Left ventricle myocardium superior (tissue), 1 donor: ENCODE measurements at regions of chr15 and their contacts with region 1.

Region 1: DNA sequence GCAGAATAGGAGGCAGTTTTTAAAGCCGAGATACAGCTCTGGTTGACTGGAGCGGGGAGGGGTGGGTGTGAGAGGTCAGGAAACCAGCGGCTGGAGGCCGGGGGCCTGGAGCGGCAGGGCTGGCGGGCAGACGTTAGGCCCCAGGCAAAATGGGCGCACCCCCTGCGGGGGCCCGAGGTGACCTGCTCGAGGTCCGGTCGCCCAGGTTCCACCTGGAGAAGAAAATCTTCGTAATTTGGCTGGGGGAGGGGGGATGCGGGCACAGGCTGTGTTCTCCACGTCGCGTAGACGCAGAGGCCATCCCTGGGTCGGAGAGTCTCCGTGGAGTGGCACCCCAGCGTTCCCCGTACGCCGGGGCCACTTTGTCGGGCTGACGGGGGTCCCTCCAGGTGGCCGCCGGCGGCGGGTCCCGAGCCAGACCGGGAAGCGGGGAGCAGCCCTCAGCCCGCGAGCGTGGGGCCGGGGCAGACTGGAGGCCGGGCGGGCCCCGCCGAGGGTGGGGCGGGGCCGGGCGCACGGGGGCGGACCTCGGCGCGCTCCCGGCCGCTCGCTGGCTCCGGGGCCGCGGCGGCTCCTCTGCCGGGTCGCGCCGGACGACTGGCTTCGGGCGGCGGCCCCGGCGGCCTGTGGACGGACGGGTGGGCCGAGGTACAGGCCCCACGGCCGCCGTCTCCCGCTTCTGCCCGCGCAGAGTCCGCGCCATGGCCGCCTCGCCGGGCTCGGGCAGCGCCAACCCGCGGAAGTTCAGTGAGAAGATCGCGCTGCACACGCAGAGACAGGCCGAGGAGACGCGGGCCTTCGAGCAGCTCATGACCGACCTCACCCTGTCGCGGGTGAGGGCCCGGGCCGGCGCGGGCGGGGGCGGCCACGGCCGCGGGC is at the start of gene CRTC3:
- DNase-seq: peak; percentile 82
- ATAC-seq: peak; percentile 92
- total RNA-seq, gene CRTC3: 29.8 TPM

Region 2: GRCh38 chr15:90501898-90502297 is 27.7 kb before region 1 on chr15:
- intact Hi-C with region 1: no loop called
- DNase-seq: no peak
- ATAC-seq: no peak

Region 3: GRCh38 chr15:90598031-90598577 is 68.5 kb after region 1 on chr15:
- intact Hi-C with region 1: loop called (anchors 10 kb)
- DNase-seq: peak; percentile 63
- ATAC-seq: peak; percentile 69